H1 (cell line): ENCODE measurements at regions of chr7 and their contacts with region 1.

Region 1: DNA sequence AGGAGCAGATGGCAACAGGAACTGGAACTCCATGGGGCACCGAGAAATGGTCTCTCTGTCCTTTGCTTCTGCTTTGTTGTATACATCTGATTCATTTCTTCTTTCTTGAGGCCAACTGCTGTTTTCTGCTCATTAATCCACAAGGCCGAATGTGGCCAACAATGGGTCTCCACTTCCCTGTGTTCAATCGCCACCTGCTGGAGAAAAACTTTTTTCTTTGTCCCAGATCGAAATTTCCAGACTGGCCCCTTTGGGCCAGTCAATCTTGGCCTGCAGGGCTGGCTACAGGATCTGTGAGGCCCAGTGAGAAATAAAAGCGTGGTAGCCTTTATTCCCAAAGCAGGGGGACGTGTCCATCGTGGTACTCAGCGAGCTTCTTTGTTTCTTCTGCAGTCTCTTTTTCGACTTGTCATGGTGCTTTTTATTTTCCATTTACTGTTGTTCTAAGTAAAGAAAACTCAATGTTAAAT is 58.8 kb downstream of the PARP12 start:
- DNase-seq: peak; percentile 15 to 64
- H3K4me3 ChIP-seq: no peak overlapping the region
- H3K27ac ChIP-seq: no peak overlapping the region
- H3K4me1 ChIP-seq: no peaks in the 10 kb centered on the region
- H3K27me3 ChIP-seq: no peaks in the 10 kb centered on the region
- CTCF ChIP-seq: peak; percentile 15 to 76 (median 58)
- EP300 ChIP-seq: no peak
- POLR2A ChIP-seq: no peak
- RAD21 ChIP-seq: peak; percentile 78 to 86

Region 2: GRCh38 chr7:139588632-139589031 is 415.3 kb before region 1 on chr7:
- CTCF ChIA-PET with region 1: interaction called, 15 read pairs
- POLR2A ChIA-PET with region 1: no interaction called
- DNase-seq: peak in 1 of 2 experiments; percentile 41
- H3K4me3 ChIP-seq: no peak overlapping the region
- H3K27ac ChIP-seq: no peak overlapping the region
- H3K4me1 ChIP-seq: no peaks in the 10 kb centered on the region; a peak in 1 of 7 replicates
- H3K27me3 ChIP-seq: no peaks in the 10 kb centered on the region
- CTCF ChIP-seq: no peak
- EP300 ChIP-seq: no peak
- POLR2A ChIP-seq: no peak
- RAD21 ChIP-seq: no peak

Region 3: GRCh38 chr7:139620676-139621344 is 383.1 kb before region 1 on chr7:
- CTCF ChIA-PET with region 1: interaction called, 111 read pairs
- POLR2A ChIA-PET with region 1: no interaction called
- DNase-seq: peak in 1 of 2 experiments; percentile 93
- H3K4me3 ChIP-seq: no peak overlapping the region
- H3K27ac ChIP-seq: no peak overlapping the region
- H3K4me1 ChIP-seq: no peaks in the 10 kb centered on the region; a peak in 1 of 7 replicates
- H3K27me3 ChIP-seq: no peaks in the 10 kb centered on the region
- CTCF ChIP-seq: peak; percentile 88 to 90 (median 90)
- EP300 ChIP-seq: no peak
- POLR2A ChIP-seq: no peak
- RAD21 ChIP-seq: peak; percentile 90 to 93

Region 4: GRCh38 chr7:139987691-139988516 is 16.0 kb before region 1 on chr7:
- CTCF ChIA-PET with region 1: interaction called, 21 read pairs
- POLR2A ChIA-PET with region 1: interaction called, 6 read pairs
- DNase-seq: no peak
- H3K4me3 ChIP-seq: no peak overlapping the region
- H3K27ac ChIP-seq: no peak overlapping the region
- H3K4me1 ChIP-seq: peaks cover 0 to 9% (median 0%) of the 10 kb centered on the region in 4 experiments; a peak in 3 of 7 replicates
- H3K27me3 ChIP-seq: peaks cover 0 to 5% (median 0%) of the 10 kb centered on the region in 4 experiments; a peak in 1 of 7 replicates
- CTCF ChIP-seq: peak in 2 of 3 experiments; percentile 17 to 22; a peak in 3 of 4 replicates
- EP300 ChIP-seq: no peak
- POLR2A ChIP-seq: no peak
- RAD21 ChIP-seq: no peak

Region 5: DNA sequence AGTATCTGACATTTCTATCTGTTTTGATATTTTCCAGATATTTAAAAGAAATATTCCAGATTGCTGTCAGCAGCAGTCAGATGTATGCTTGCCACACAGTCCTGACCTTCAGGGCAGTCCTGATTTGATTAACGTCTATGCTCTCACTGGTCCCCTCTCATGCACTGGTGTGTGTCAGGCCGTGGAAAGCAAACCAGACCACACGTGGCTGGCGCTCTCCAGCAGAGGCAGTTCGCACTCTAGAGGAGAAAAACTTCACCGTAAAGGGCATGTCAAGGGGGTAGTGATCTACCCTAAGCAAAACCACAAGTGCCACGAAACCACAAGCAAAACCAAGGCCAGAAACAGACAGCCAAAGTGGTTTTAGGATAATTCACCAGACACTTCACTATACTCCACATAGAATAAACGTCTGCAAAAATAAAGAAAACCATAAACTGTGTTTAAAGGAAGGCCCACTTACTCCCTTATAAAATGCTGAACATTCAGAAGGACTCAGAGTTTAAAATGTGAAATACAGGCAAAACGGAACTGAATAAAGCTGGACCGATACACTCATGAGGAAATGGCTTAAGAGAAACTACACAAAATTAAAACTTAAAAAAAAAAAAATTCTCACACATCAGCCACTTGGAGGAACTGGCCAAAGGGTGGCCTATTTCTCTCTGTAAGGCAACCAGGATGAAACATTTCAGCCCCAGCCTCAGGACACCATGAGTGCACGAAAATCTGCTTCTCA is 32.4 kb after region 1 on chr7:
- CTCF ChIA-PET with region 1: no interaction called
- POLR2A ChIA-PET with region 1: no interaction called
- DNase-seq: no peak
- H3K4me3 ChIP-seq: no peak overlapping the region
- H3K27ac ChIP-seq: no peak overlapping the region
- H3K4me1 ChIP-seq: no peaks in the 10 kb centered on the region
- H3K27me3 ChIP-seq: no peaks in the 10 kb centered on the region
- CTCF ChIP-seq: no peak
- EP300 ChIP-seq: no peak
- POLR2A ChIP-seq: no peak
- RAD21 ChIP-seq: no peak